GM12878 (cell line): ENCODE measurements at regions of chr13 and their contacts with region 1.

Region 1: DNA sequence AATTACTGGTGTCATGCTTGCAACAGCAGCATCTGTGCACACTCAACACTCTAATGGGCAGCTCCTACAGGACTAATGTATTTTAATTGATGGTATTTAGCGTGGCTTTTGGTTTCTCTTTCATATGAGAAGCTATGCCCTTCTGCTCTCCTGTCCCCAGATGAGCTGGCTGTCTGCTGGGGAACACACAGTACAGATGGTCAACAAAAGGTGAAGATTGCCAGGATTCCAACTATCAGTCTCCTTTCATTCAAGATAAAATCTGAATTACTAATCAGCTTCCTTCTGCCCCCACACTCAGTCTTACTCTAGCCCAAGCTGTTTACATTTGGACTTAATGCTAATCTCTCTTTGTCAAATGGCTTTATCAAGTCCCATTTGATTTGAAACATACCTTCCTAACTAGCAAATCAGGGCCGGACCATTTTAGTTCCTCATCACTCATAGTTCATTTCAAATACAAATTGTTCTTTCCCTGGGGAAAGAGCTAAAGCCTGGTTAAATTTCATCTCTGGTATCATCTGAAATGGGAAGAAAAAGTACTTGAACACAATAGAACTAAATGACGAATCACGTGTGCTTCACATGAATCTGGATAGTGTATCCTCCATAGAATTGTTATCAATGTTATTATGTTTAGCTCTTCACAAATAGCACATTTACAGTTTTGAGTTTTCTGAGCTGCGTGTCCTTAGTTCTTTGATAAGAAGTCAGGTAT is 988.0 kb downstream of the PCDH17 start:
- DNase-seq: no peak
- ATAC-seq: peak; percentile 96
- H3K4me3 ChIP-seq: no peak overlapping the region
- H3K27ac ChIP-seq: no peak overlapping the region
- H3K4me1 ChIP-seq: no peaks in the 10 kb centered on the region
- H3K27me3 ChIP-seq: no peaks in the 10 kb centered on the region
- CTCF ChIP-seq: no peak
- EP300 ChIP-seq: no peak
- POLR2A ChIP-seq: no peak
- RAD21 ChIP-seq: no peak

Region 2: GRCh38 chr13:58376775-58377174 is 242.8 kb before region 1 on chr13:
- CTCF ChIA-PET with region 1: no interaction called
- POLR2A ChIA-PET with region 1: no interaction called
- RAD21 ChIA-PET with region 1: no interaction called
- SMC1A ChIA-PET with region 1: interaction called, 13 read pairs
- in situ Hi-C with region 1: no loop called
- intact Hi-C with region 1: no loop called
- DNase-seq: peak; percentile 7
- ATAC-seq: peak; percentile 82
- H3K4me3 ChIP-seq: no peak overlapping the region
- H3K27ac ChIP-seq: no peak overlapping the region
- H3K4me1 ChIP-seq: no peaks in the 10 kb centered on the region
- H3K27me3 ChIP-seq: no peaks in the 10 kb centered on the region
- CTCF ChIP-seq: no peak
- EP300 ChIP-seq: peak in 1 of 2 experiments; percentile 79; a peak in 2 of 4 replicates
- POLR2A ChIP-seq: no peak
- RAD21 ChIP-seq: no peak

Region 3: GRCh38 chr13:58452123-58452623 is 167.4 kb before region 1 on chr13:
- CTCF ChIA-PET with region 1: no interaction called
- POLR2A ChIA-PET with region 1: no interaction called
- RAD21 ChIA-PET with region 1: no interaction called
- SMC1A ChIA-PET with region 1: no interaction called
- in situ Hi-C with region 1: no loop called
- intact Hi-C with region 1: no loop called
- DNase-seq: no peak
- ATAC-seq: no peak
- H3K4me3 ChIP-seq: no peak overlapping the region
- H3K27ac ChIP-seq: no peak overlapping the region
- H3K4me1 ChIP-seq: no peaks in the 10 kb centered on the region
- H3K27me3 ChIP-seq: no peaks in the 10 kb centered on the region
- CTCF ChIP-seq: no peak
- EP300 ChIP-seq: no peak
- POLR2A ChIP-seq: no peak
- RAD21 ChIP-seq: no peak

Region 4: GRCh38 chr13:58598241-58598640 is 21.3 kb before region 1 on chr13:
- CTCF ChIA-PET with region 1: interaction called, 6 read pairs
- POLR2A ChIA-PET with region 1: no interaction called
- RAD21 ChIA-PET with region 1: interaction called, 12 read pairs
- SMC1A ChIA-PET with region 1: interaction called, 5 read pairs
- in situ Hi-C with region 1: no loop called
- intact Hi-C with region 1: no loop called
- DNase-seq: no peak
- ATAC-seq: no peak
- H3K4me3 ChIP-seq: no peak overlapping the region
- H3K27ac ChIP-seq: no peak overlapping the region
- H3K4me1 ChIP-seq: no peaks in the 10 kb centered on the region
- H3K27me3 ChIP-seq: no peaks in the 10 kb centered on the region
- CTCF ChIP-seq: no peak
- EP300 ChIP-seq: no peak
- POLR2A ChIP-seq: no peak
- RAD21 ChIP-seq: no peak

Region 5: GRCh38 chr13:58953638-58954037 is 334.1 kb after region 1 on chr13:
- CTCF ChIA-PET with region 1: interaction called, 3 read pairs
- POLR2A ChIA-PET with region 1: no interaction called
- RAD21 ChIA-PET with region 1: interaction called, 7 read pairs
- SMC1A ChIA-PET with region 1: interaction called, 10 read pairs
- in situ Hi-C with region 1: no loop called
- intact Hi-C with region 1: no loop called
- DNase-seq: peak; percentile 87
- ATAC-seq: peak; percentile 76
- H3K4me3 ChIP-seq: no peak overlapping the region
- H3K27ac ChIP-seq: peak overlapping the region; percentile 18; the same call in 1 of the 2 replicates
- H3K4me1 ChIP-seq: no peaks in the 10 kb centered on the region; the same call in 1 of the 2 replicates
- H3K27me3 ChIP-seq: no peaks in the 10 kb centered on the region
- CTCF ChIP-seq: no peak
- EP300 ChIP-seq: peak; percentile 99
- POLR2A ChIP-seq: no peak
- RAD21 ChIP-seq: no peak

Region 6: DNA sequence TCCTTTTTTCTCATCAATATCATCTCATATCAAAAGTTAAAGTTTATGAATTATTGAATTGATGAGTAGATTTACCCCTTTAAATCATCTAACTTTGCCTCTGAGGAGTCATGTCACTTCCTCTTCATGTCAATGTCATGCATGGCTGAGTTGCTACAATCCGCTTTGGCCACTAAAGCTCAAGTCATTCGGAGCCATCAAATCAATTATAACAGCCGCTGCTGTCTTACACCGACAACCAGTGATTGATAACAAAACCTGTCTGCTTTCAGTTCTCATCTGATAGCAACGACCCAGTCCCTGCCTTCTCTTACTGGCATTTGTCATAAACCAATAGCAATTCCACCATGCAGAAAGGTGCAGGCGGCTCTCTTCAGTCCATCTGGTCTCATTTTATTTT is 1114.8 kb after region 1 on chr13:
- CTCF ChIA-PET with region 1: no interaction called
- POLR2A ChIA-PET with region 1: no interaction called
- RAD21 ChIA-PET with region 1: no interaction called
- SMC1A ChIA-PET with region 1: no interaction called
- in situ Hi-C with region 1: no loop called
- intact Hi-C with region 1: loop called (anchors 10 kb)
- DNase-seq: peak; percentile 93
- ATAC-seq: peak; percentile 100
- H3K4me3 ChIP-seq: peak overlapping the region; percentile 20; the same call in 1 of the 2 replicates
- H3K27ac ChIP-seq: peak overlapping the region; percentile 10
- H3K4me1 ChIP-seq: peaks cover 6% of the 10 kb centered on the region; the same call in 1 of the 2 replicates
- H3K27me3 ChIP-seq: no peaks in the 10 kb centered on the region
- CTCF ChIP-seq: no peak
- EP300 ChIP-seq: peak; percentile 74 to 91; a peak in 3 of 4 replicates
- POLR2A ChIP-seq: no peak
- RAD21 ChIP-seq: 0 out of 2 replicates have a peak, but pooled peaks have one; percentile 12